ENCODE measurements at regions of chr7 and their contacts with region 1.

Region 1: DNA sequence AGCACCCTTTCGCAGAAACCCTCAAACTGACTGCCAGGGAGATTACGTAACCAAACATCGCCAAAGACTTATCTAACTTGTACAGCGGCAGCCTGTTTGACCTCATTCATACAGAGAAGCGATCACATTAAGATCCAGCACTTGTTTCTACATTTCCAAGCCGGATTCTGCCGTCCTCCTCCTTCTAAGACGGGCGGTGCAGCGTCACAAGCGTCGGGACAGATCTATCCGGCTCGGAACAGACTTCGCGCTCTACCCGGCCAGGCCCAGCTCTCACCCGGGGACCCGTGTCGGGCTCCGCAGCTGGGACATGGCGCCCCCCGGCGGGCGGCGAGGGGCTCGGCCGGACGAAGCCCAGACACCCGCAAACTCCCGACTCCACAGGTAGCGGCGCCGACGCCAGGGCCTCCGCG is 373 bp downstream of the H2AZ2 start:
- DNase-seq: peak; percentile 75 to 94 (median 84)
- ATAC-seq: peak; percentile 54
- H3K4me3 ChIP-seq: peak overlapping the region; percentile 71
- H3K4me3 Mint-ChIP-seq: peak overlapping the region; percentile 87
- H3K27ac ChIP-seq: peak overlapping the region; percentile 91 to 99
- H3K27ac Mint-ChIP-seq: peak overlapping the region; percentile 95
- H3K4me1 ChIP-seq: peaks cover 17% of the 10 kb centered on the region
- H3K4me1 Mint-ChIP-seq: peaks cover 43% of the 10 kb centered on the region
- H3K27me3 ChIP-seq: no peaks in the 10 kb centered on the region
- H3K27me3 Mint-ChIP-seq: peaks cover 4% of the 10 kb centered on the region
- CTCF ChIP-seq: peak; percentile 68

Region 2: GRCh38 chr7:44573464-44574286 is 273.8 kb before region 1 on chr7 and contains the start of gene DDX56:
- CTCF ChIA-PET with region 1: no interaction called
- POLR2A ChIA-PET with region 1: interaction called, 40 read pairs
- intact Hi-C with region 1: no loop called
- DNase-seq: peak; percentile 83 to 97 (median 90)
- ATAC-seq: peak; percentile 96
- H3K4me3 ChIP-seq: peak within 1 kb of the TSS; percentile 71
- H3K4me3 Mint-ChIP-seq: peak within 1 kb of the TSS; percentile 95
- H3K27ac ChIP-seq: peak within 1 kb of the TSS; percentile 77 to 82
- H3K27ac Mint-ChIP-seq: peak within 1 kb of the TSS; percentile 99
- H3K4me1 ChIP-seq: peaks cover 35% of the 10 kb centered on the region
- H3K4me1 Mint-ChIP-seq: peaks cover 48% of the 10 kb centered on the region
- H3K27me3 ChIP-seq: no peaks in the 10 kb centered on the region
- H3K27me3 Mint-ChIP-seq: no peaks in the 10 kb centered on the region
- CTCF ChIP-seq: no peak
- total RNA-seq, gene DDX56: 126 to 127 TPM

Region 3: DNA sequence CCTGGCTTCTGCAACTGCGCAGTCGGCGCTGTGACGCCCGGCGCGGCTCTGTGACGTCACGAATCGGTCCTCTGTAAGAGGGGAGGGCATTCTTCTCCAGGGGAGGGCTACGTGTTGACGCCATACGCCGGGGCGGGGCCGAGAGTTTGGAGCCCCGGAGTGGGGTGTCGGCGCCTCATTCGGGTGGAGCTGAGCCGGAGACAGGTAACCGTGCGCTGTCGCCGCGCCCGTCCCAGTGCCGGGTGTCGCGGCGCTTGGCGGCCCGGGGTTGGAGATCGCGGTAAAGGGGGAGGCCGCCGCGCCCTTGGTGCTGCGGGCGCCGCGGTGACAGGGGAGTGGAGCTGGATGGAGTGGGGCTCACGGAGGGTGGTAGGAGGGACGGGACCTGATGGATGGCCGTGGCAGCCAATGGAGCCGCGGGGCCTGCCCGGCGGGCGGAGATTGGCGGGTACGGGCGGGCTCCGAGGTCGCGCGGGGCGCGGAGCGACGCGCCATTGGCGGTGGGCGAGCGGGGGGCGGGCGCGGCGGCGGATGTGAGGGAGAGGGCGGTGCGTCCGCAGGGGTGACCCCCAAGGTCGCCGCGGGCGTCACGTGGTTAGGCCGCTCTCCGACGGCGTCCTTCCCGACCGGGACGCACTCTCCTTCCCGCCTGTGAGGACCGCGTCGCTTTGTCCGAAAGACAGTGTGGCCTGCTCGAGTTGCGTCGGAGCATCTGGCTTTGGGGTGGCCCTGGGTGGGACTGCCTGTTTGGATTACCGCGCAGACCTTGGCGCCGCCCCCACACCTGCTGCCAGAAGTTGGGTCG is 240.9 kb before region 1 on chr7 and contains the start of gene OGDH:
- CTCF ChIA-PET with region 1: no interaction called
- POLR2A ChIA-PET with region 1: interaction called, 87 read pairs
- intact Hi-C with region 1: loop called in 1 of 2 experiments (anchors 1 kb)
- DNase-seq: peak; percentile 97 to 100 (median 99)
- ATAC-seq: peak; percentile 91
- H3K4me3 ChIP-seq: peak within 1 kb of the TSS; percentile 69
- H3K4me3 Mint-ChIP-seq: peak within 1 kb of the TSS; percentile 100
- H3K27ac ChIP-seq: peak within 1 kb of the TSS; percentile 86 to 99
- H3K27ac Mint-ChIP-seq: peak within 1 kb of the TSS; percentile 100
- H3K4me1 ChIP-seq: peaks cover 43% of the 10 kb centered on the region
- H3K4me1 Mint-ChIP-seq: peaks cover 44% of the 10 kb centered on the region
- H3K27me3 ChIP-seq: no peaks in the 10 kb centered on the region
- H3K27me3 Mint-ChIP-seq: peaks cover 5% of the 10 kb centered on the region
- CTCF ChIP-seq: no peak
- total RNA-seq, gene OGDH: 39.8 to 43.8 TPM

Region 4: DNA sequence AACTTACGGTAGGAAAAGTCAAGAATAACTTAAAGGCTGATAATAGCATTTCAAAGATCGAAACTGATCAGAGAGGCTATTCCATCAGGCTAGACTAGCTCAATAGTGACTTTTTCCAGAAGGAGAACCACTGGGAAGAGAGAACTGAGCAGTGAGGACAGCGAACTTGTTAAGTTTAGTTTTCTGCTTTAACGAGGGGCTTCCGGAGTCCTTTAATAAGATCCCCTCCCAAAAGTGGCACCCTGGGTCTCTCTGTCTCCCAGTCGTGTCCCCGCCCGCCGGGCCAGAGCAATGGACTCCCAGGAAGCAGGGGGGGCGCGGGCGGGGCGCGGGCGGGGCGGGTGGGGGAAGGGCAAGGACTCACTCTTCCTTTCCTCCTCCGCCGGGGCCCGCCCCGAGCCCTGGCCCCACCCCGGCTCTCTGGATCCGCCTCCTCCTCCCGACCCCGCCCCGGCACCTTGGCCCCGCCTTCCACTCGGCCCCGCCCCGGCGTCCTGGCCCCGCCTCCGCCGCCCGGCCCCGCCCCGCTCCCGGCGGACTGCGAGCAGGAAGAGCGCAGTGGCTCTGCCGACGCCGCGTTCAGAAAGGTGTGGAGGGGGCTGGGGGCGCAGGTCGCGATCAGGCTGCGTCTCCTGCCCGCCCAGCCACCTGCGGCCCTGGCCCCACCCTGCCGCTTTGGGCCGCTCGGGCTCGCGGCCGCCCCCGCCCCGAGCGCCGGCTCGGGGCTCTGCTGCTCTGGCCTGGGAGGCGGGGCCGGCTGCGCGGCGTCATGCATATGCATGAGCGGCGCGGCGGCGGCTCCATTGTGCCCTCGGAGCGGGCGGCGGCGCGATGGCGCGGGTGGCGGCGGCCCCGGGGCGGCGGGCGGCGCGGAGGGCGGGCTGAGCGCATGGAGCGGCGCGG is 99.2 kb before region 1 on chr7 and contains the start of gene ZMIZ2:
- CTCF ChIA-PET with region 1: interaction called, 3 read pairs
- POLR2A ChIA-PET with region 1: interaction called, 22 read pairs
- intact Hi-C with region 1: loop called in 1 of 2 experiments (anchors 1 kb)
- DNase-seq: peak; percentile 85 to 97 (median 92)
- ATAC-seq: peak; percentile 85
- H3K4me3 ChIP-seq: peak within 1 kb of the TSS; percentile 87
- H3K4me3 Mint-ChIP-seq: peak within 1 kb of the TSS; percentile 84
- H3K27ac ChIP-seq: peak within 1 kb of the TSS; percentile 70 to 75
- H3K27ac Mint-ChIP-seq: peak within 1 kb of the TSS; percentile 86
- H3K4me1 ChIP-seq: peaks cover 37% of the 10 kb centered on the region
- H3K4me1 Mint-ChIP-seq: peaks cover 43% of the 10 kb centered on the region
- H3K27me3 ChIP-seq: no peaks in the 10 kb centered on the region
- H3K27me3 Mint-ChIP-seq: no peaks in the 10 kb centered on the region
- CTCF ChIP-seq: no peak
- total RNA-seq, gene ZMIZ2: 81.5 to 82.0 TPM

Region 5: GRCh38 chr7:44811086-44811485 is 36.4 kb before region 1 on chr7:
- CTCF ChIA-PET with region 1: interaction called, 4 read pairs
- POLR2A ChIA-PET with region 1: interaction called, 6 read pairs
- intact Hi-C with region 1: loop called in 1 of 2 experiments (anchors 5 kb)
- DNase-seq: no peak
- ATAC-seq: no peak
- H3K4me3 ChIP-seq: no peak overlapping the region
- H3K4me3 Mint-ChIP-seq: no peak overlapping the region
- H3K27ac ChIP-seq: no peak overlapping the region
- H3K27ac Mint-ChIP-seq: no peak overlapping the region
- H3K4me1 ChIP-seq: no peaks in the 10 kb centered on the region
- H3K4me1 Mint-ChIP-seq: no peaks in the 10 kb centered on the region
- H3K27me3 ChIP-seq: no peaks in the 10 kb centered on the region
- H3K27me3 Mint-ChIP-seq: no peaks in the 10 kb centered on the region
- CTCF ChIP-seq: no peak

Region 6: DNA sequence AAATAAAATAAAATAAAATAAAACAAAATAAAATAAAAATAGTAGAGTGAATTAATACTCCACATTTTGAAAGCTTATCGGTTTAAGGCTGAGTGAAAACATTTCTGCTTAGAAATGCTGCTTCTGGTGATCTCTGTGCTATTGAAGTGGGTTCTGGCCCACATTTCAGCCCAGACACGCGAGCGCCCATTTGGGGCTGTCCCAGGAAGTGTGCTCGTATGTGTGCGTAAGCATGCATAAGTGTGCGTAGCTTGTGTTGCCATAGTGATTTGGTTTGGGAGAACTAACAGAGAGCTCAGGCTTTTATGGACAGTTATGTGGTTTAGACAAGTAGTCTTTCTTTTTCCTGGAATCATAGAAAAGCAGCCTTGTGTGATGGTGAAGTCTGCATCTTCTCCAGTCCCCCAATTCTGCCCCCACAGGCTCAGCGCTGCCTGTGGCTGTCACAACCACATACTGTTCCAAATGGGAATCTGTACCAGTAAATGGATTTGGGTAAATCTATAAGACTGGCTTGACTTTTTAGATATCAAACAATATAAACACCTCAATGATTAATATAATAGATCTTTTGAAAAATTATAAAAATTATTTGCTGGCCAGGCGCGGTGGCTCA is 67.6 kb after region 1 on chr7:
- CTCF ChIA-PET with region 1: no interaction called
- POLR2A ChIA-PET with region 1: interaction called, 6 read pairs
- intact Hi-C with region 1: loop called in 1 of 2 experiments (anchors 2 kb)
- DNase-seq: peak; percentile 17 to 90 (median 52)
- ATAC-seq: peak; percentile 91
- H3K4me3 ChIP-seq: no peak overlapping the region
- H3K4me3 Mint-ChIP-seq: peak overlapping the region; percentile 47
- H3K27ac ChIP-seq: peak overlapping the region in 1 of 2 donors; percentile 38
- H3K27ac Mint-ChIP-seq: peak overlapping the region; percentile 75
- H3K4me1 ChIP-seq: no peaks in the 10 kb centered on the region
- H3K4me1 Mint-ChIP-seq: peaks cover 6% of the 10 kb centered on the region
- H3K27me3 ChIP-seq: no peaks in the 10 kb centered on the region
- H3K27me3 Mint-ChIP-seq: no peaks in the 10 kb centered on the region
- CTCF ChIP-seq: no peak

Measured in CD4-positive, alpha-beta T cell (primary cell).